Caco-2 (cell line): ENCODE measurements at regions of chr5 and their contacts with region 1.

Region 1: GRCh38 chr5:74833537-74834266 is 32.5 kb downstream of the FAM169A start:
- DNase-seq: peak; percentile 31 to 40
- H3K4me3 ChIP-seq: no peak overlapping the region
- H3K4me3 Mint-ChIP-seq: no peak overlapping the region
- H3K27ac Mint-ChIP-seq: peak overlapping the region; percentile 31
- H3K4me1 ChIP-seq: peaks cover 18% of the 10 kb centered on the region; the same call in 1 of the 2 replicates
- H3K4me1 Mint-ChIP-seq: peaks cover 16% of the 10 kb centered on the region
- H3K27me3 ChIP-seq: no peaks in the 10 kb centered on the region
- H3K27me3 Mint-ChIP-seq: no peaks in the 10 kb centered on the region
- CTCF ChIP-seq: no peak

Region 2: DNA sequence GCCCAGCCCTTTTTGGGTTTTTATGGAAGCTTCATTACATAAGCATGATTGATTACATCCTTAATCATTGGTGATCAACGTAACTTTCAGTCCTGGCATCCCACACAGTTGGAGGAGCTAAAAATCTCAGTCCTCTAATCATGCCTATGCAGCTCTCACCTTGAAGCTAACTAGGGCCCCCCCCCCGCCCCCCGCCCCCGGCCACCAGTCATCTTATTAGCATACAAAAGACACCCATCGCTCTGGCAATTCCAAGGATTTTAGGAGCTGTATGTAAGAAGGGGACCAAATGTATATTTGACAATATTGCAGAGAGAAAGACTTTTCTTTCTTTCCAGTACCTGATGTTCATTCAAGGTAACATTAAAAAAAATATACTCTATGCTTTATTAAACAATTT is 212.2 kb before region 1 on chr5:
- CTCF ChIA-PET with region 1: no interaction called
- POLR2A ChIA-PET with region 1: interaction called, 10 read pairs
- intact Hi-C with region 1: no loop called
- DNase-seq: no peak
- H3K4me3 ChIP-seq: no peak overlapping the region
- H3K4me3 Mint-ChIP-seq: no peak overlapping the region
- H3K27ac Mint-ChIP-seq: no peak overlapping the region
- H3K4me1 ChIP-seq: peaks cover 50% of the 10 kb centered on the region
- H3K4me1 Mint-ChIP-seq: peaks cover 72% of the 10 kb centered on the region
- H3K27me3 ChIP-seq: no peaks in the 10 kb centered on the region
- H3K27me3 Mint-ChIP-seq: no peaks in the 10 kb centered on the region
- CTCF ChIP-seq: no peak

Region 3: GRCh38 chr5:74943905-74944304 is 110.2 kb after region 1 on chr5:
- CTCF ChIA-PET with region 1: no interaction called
- POLR2A ChIA-PET with region 1: no interaction called
- intact Hi-C with region 1: no loop called
- DNase-seq: no peak
- H3K4me3 ChIP-seq: no peak overlapping the region
- H3K4me3 Mint-ChIP-seq: no peak overlapping the region
- H3K27ac Mint-ChIP-seq: peak overlapping the region; percentile 12
- H3K4me1 ChIP-seq: peaks cover 72% of the 10 kb centered on the region
- H3K4me1 Mint-ChIP-seq: peaks cover 50% of the 10 kb centered on the region
- H3K27me3 ChIP-seq: no peaks in the 10 kb centered on the region
- H3K27me3 Mint-ChIP-seq: no peaks in the 10 kb centered on the region
- CTCF ChIP-seq: peak; percentile 39 to 73

Region 4: DNA sequence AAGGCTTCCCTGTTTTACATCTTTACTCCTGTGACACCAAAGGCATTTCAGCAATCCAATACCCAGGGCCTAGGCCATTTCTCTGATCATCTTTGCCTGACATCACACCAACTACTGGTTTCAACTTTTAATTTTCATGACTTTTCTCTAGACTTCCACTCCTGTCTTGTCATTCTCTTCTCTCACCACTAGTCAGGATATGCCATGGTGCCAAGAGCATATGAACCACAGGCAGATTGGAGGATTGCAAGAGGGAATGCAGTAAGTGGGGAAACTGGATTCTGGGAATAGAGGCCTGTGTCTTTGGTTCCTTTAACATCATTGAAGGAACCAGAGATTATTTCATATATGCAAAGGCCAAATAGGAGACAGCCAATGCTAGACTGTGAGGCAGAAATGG is 333.6 kb after region 1 on chr5:
- CTCF ChIA-PET with region 1: no interaction called
- POLR2A ChIA-PET with region 1: no interaction called
- intact Hi-C with region 1: no loop called
- DNase-seq: peak in 1 of 2 experiments; percentile 13
- H3K4me3 ChIP-seq: no peak overlapping the region
- H3K4me3 Mint-ChIP-seq: no peak overlapping the region
- H3K27ac Mint-ChIP-seq: no peak overlapping the region
- H3K4me1 ChIP-seq: peaks cover 19% of the 10 kb centered on the region
- H3K4me1 Mint-ChIP-seq: peaks cover 17% of the 10 kb centered on the region
- H3K27me3 ChIP-seq: no peaks in the 10 kb centered on the region
- H3K27me3 Mint-ChIP-seq: no peaks in the 10 kb centered on the region
- CTCF ChIP-seq: peak in 1 of 2 experiments; percentile 19